ENCODE measurements at regions of chr21 and their contacts with region 1.

Region 1: GRCh38 chr21:37463083-37463801 is 96.7 kb downstream of the DYRK1A start:
- DNase-seq: peak; percentile 23
- ATAC-seq: peak; percentile 55
- H3K4me3 Mint-ChIP-seq: no peak overlapping the region
- H3K27ac Mint-ChIP-seq: peak overlapping the region; percentile 71
- H3K4me1 Mint-ChIP-seq: peaks cover 70% of the 10 kb centered on the region
- H3K27me3 Mint-ChIP-seq: no peaks in the 10 kb centered on the region

Region 2: GRCh38 chr21:37220981-37221664 is 242.1 kb before region 1 on chr21:
- CTCF ChIA-PET with region 1: no interaction called
- POLR2A ChIA-PET with region 1: no interaction called
- intact Hi-C with region 1: loop called in 1 of 2 experiments (anchors 1 kb)
- DNase-seq: peak; percentile 98
- ATAC-seq: peak; percentile 84
- H3K4me3 Mint-ChIP-seq: peak overlapping the region; percentile 82
- H3K27ac Mint-ChIP-seq: peak overlapping the region; percentile 97
- H3K4me1 Mint-ChIP-seq: peaks cover 47% of the 10 kb centered on the region
- H3K27me3 Mint-ChIP-seq: no peaks in the 10 kb centered on the region

Region 3: DNA sequence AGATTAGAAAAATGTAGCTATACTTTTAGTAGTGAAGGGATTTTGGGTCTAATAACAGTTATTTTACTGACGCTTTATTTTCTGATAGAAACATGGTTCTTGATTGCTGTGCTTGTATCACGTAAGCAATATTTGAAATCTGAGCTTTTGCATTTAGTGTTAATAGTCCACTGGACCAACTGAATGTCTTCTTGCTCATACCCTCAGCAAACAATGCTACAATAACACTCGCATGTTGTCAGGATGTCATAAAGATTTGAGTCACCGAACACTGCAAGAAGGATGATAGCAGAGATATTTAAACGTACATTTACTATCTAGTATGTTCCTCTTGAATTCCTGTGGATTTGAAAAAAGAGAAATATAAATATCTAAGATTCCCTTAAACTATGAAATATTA is 89.2 kb before region 1 on chr21:
- CTCF ChIA-PET with region 1: interaction called, 14 read pairs
- POLR2A ChIA-PET with region 1: interaction called, 3 read pairs
- intact Hi-C with region 1: loop called (anchors 1 to 2 kb)
- DNase-seq: no peak
- ATAC-seq: no peak
- H3K4me3 Mint-ChIP-seq: no peak overlapping the region
- H3K27ac Mint-ChIP-seq: peak overlapping the region; percentile 71
- H3K4me1 Mint-ChIP-seq: peaks cover 85% of the 10 kb centered on the region
- H3K27me3 Mint-ChIP-seq: no peaks in the 10 kb centered on the region

Region 4: DNA sequence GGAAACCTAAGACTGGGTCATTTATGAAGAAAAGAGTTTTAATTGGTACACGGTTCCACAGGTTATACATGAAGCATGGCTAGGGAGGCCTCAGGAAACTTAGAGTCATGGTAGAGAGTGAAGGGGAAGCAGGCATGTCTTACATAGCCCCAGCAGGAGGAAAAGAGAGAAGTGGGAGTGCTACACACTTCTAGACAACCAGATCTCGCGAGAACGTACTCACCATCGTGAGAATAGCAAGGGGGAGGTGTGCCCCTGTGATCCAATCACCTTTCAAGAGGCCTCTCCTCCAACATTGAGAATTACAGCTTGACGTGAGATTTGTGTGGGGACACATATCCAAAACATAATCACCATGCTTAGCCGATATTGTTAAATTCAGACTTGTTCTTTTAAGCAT is 33.9 kb before region 1 on chr21:
- CTCF ChIA-PET with region 1: interaction called, 5 read pairs
- POLR2A ChIA-PET with region 1: interaction called, 5 read pairs
- intact Hi-C with region 1: loop called in 1 of 2 experiments (anchors 5 kb)
- DNase-seq: no peak
- ATAC-seq: no peak
- H3K4me3 Mint-ChIP-seq: no peak overlapping the region
- H3K27ac Mint-ChIP-seq: peak overlapping the region; percentile 38
- H3K4me1 Mint-ChIP-seq: peaks cover 66% of the 10 kb centered on the region
- H3K27me3 Mint-ChIP-seq: no peaks in the 10 kb centered on the region

Region 5: GRCh38 chr21:37475186-37475868 is 12.1 kb after region 1 on chr21:
- CTCF ChIA-PET with region 1: interaction called, 25 read pairs
- POLR2A ChIA-PET with region 1: interaction called, 5 read pairs
- intact Hi-C with region 1: no loop called
- DNase-seq: no peak
- ATAC-seq: peak; percentile 74
- H3K4me3 Mint-ChIP-seq: no peak overlapping the region
- H3K27ac Mint-ChIP-seq: no peak overlapping the region
- H3K4me1 Mint-ChIP-seq: peaks cover 62% of the 10 kb centered on the region
- H3K27me3 Mint-ChIP-seq: no peaks in the 10 kb centered on the region

Measured in activated CD4-positive, alpha-beta T cell treated with anti-CD3 and anti-CD28 coated beads for 36 hours (primary cell).